MCF 10A (cell line): ENCODE measurements at regions of chr14 and their contacts with region 1.

Region 1: GRCh38 chr14:69129264-69129880 is 23.5 kb downstream of the DCAF5 start:
- DNase-seq: peak; percentile 80
- H3K4me3 Mint-ChIP-seq: no peak overlapping the region
- H3K27ac Mint-ChIP-seq: no peak overlapping the region
- H3K4me1 Mint-ChIP-seq: peaks cover 32% of the 10 kb centered on the region
- H3K27me3 Mint-ChIP-seq: no peaks in the 10 kb centered on the region
- CTCF ChIP-seq: peak; percentile 88

Region 2: DNA sequence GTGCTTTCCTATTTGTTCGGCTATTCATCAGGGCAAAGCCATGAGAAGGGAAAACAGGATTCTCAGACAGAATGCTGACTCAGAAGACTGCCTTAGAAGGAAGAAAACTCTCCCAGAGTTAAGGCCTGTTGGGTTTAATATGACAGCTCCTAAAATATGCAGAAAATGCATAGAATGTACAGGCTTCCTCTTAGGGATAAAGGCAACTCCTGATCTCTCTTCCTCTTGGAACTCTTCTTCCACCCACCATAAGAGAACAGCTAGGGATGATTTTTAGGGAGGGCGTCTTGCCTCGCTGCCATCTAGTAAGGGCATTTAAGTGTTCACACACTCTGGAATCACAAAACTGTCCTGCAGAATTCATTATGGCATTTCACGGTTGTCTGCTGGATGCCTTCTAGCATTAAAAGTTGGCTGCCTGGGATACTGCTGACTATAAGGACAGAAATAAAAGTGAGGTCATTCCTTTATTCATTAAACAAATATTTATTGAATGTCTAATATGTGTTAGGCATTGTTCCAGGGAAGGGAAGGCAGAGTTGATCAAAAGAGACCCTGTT is 50.1 kb before region 1 on chr14:
- CTCF ChIA-PET with region 1: no interaction called
- POLR2A ChIA-PET with region 1: no interaction called
- intact Hi-C with region 1: no loop called
- DNase-seq: no peak
- H3K4me3 Mint-ChIP-seq: no peak overlapping the region
- H3K27ac Mint-ChIP-seq: peak overlapping the region; percentile 50
- H3K4me1 Mint-ChIP-seq: peaks cover 23% of the 10 kb centered on the region
- H3K27me3 Mint-ChIP-seq: no peaks in the 10 kb centered on the region
- CTCF ChIP-seq: no peak

Region 3: DNA sequence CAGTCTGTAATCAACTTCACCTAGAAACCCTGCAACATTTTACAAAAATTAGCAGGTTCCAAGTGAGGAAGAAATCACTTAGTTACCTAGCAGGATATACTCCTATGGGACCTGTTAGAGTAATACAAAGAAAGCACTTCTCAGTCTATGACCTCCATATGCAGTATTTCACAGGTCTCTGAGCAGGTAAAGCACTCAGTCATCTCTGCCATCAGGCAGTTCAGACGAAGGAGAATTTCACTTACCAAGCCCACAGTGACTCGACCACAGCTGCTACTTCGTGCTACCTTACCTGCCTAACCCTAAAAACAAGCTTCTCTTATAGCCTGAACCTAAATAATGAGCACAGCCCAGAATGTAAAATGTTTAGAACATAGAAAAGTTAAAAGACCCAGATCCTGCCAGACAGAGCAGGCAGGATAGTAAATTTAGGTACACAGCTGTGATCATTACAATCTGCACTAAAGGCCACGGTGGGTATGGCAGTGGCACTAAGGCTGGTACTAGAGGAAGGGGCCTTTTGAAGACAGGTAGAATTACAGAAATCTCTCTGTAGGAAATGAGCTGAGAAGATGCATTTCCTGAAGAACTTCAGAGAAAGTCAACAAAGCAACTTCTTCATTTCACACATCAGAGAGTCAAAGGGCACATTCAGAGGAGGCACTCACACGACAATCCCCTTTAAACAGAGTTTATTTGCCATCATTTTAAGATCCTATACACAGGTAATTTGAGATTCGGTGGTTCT is 12.2 kb before region 1 on chr14:
- CTCF ChIA-PET with region 1: interaction called, 17 read pairs
- POLR2A ChIA-PET with region 1: interaction called, 5 read pairs
- intact Hi-C with region 1: no loop called
- DNase-seq: no peak
- H3K4me3 Mint-ChIP-seq: no peak overlapping the region
- H3K27ac Mint-ChIP-seq: no peak overlapping the region
- H3K4me1 Mint-ChIP-seq: no peaks in the 10 kb centered on the region
- H3K27me3 Mint-ChIP-seq: no peaks in the 10 kb centered on the region
- CTCF ChIP-seq: no peak

Region 4: GRCh38 chr14:69142101-69142500 is 12.7 kb after region 1 on chr14:
- CTCF ChIA-PET with region 1: interaction called, 13 read pairs
- POLR2A ChIA-PET with region 1: interaction called, 10 read pairs
- intact Hi-C with region 1: no loop called
- DNase-seq: no peak
- H3K4me3 Mint-ChIP-seq: no peak overlapping the region
- H3K27ac Mint-ChIP-seq: no peak overlapping the region
- H3K4me1 Mint-ChIP-seq: peaks cover 22% of the 10 kb centered on the region
- H3K27me3 Mint-ChIP-seq: no peaks in the 10 kb centered on the region
- CTCF ChIP-seq: no peak

Region 5: GRCh38 chr14:69153131-69153872 is 23.9 kb after region 1 on chr14:
- CTCF ChIA-PET with region 1: interaction called, 13 read pairs
- POLR2A ChIA-PET with region 1: interaction called, 77 read pairs
- intact Hi-C with region 1: loop called (anchors 1 kb)
- DNase-seq: peak; percentile 93
- H3K4me3 Mint-ChIP-seq: peak overlapping the region; percentile 90
- H3K27ac Mint-ChIP-seq: no peak overlapping the region
- H3K4me1 Mint-ChIP-seq: peaks cover 20% of the 10 kb centered on the region
- H3K27me3 Mint-ChIP-seq: no peaks in the 10 kb centered on the region
- CTCF ChIP-seq: no peak

Region 6: GRCh38 chr14:69191340-69192111 is 62.2 kb after region 1 on chr14 and contains the start of gene EXD2:
- CTCF ChIA-PET with region 1: interaction called, 17 read pairs
- POLR2A ChIA-PET with region 1: interaction called, 31 read pairs
- intact Hi-C with region 1: loop called (anchors 2 kb)
- DNase-seq: peak; percentile 92
- H3K4me3 Mint-ChIP-seq: peak within 1 kb of the TSS; percentile 94
- H3K27ac Mint-ChIP-seq: peak within 1 kb of the TSS; percentile 95
- H3K4me1 Mint-ChIP-seq: peaks cover 6% of the 10 kb centered on the region
- H3K27me3 Mint-ChIP-seq: no peaks in the 10 kb centered on the region
- CTCF ChIP-seq: no peak
- total RNA-seq, gene EXD2: 17.7 and 18.7 TPM in 2 replicates

Region 7: GRCh38 chr14:69242311-69243224 is 113.2 kb after region 1 on chr14:
- CTCF ChIA-PET with region 1: interaction called, 6 read pairs
- POLR2A ChIA-PET with region 1: interaction called, 3 read pairs
- intact Hi-C with region 1: loop called (anchors 1 kb)
- DNase-seq: peak; percentile 62
- H3K4me3 Mint-ChIP-seq: no peak overlapping the region
- H3K27ac Mint-ChIP-seq: no peak overlapping the region
- H3K4me1 Mint-ChIP-seq: no peaks in the 10 kb centered on the region
- H3K27me3 Mint-ChIP-seq: no peaks in the 10 kb centered on the region
- CTCF ChIP-seq: peak; percentile 63

Region 8: GRCh38 chr14:69312608-69313007 is 183.2 kb after region 1 on chr14:
- CTCF ChIA-PET with region 1: no interaction called
- POLR2A ChIA-PET with region 1: no interaction called
- intact Hi-C with region 1: no loop called
- DNase-seq: no peak
- H3K4me3 Mint-ChIP-seq: no peak overlapping the region
- H3K27ac Mint-ChIP-seq: no peak overlapping the region
- H3K4me1 Mint-ChIP-seq: peaks cover 7% of the 10 kb centered on the region
- H3K27me3 Mint-ChIP-seq: peaks cover 45% of the 10 kb centered on the region
- CTCF ChIP-seq: no peak

Region 9: GRCh38 chr14:69460093-69460701 is 330.8 kb after region 1 on chr14:
- CTCF ChIA-PET with region 1: interaction called, 8 read pairs
- POLR2A ChIA-PET with region 1: no interaction called
- intact Hi-C with region 1: loop called (anchors 1 kb)
- DNase-seq: peak; percentile 85
- H3K4me3 Mint-ChIP-seq: no peak overlapping the region
- H3K27ac Mint-ChIP-seq: no peak overlapping the region
- H3K4me1 Mint-ChIP-seq: no peaks in the 10 kb centered on the region
- H3K27me3 Mint-ChIP-seq: no peaks in the 10 kb centered on the region
- CTCF ChIP-seq: peak; percentile 70